ENCODE measurements at regions of chr1 and their contacts with region 1.

Region 1: DNA sequence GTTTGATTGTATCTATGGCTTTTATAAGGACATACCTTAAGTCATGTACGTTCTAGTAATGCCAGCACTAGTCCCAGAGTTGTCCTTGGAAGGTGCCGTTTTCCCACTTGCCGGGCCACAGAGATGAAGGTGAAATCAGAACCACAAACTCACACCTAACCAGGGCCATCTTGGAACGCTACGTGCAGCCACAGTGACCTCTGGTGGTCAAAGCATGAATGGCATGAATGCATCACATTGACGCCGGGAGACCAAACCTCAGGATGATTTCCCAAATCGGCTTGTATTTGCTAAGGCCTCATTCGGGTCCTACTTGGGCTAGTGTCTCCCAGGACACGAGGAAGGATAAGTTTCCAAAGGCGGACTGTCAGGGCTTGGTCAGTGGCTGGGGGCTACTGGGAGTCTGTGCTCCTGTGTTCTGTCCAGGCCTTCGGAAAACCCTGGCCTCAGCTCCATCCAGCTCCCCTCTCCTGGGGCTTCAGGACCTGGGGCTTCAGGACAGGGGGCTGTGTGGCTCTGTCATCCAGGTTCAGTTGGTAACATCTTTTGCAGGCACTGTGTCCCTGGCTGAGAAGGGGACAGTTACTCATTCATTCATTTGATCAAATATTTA is 260.5 kb downstream of the PRDM2 start:
- DNase-seq: peak; percentile 32 to 45
- ATAC-seq: peak; percentile 63 to 81
- H3K4me3 ChIP-seq: no peak overlapping the region
- H3K27ac ChIP-seq: no peak overlapping the region
- H3K4me1 ChIP-seq: no peaks in the 10 kb centered on the region
- H3K27me3 ChIP-seq: peaks cover 0 to 2% (median 0%) of the 10 kb centered on the region in 3 donors
- CTCF ChIP-seq: peak; percentile 91 to 98 (median 92)
- POLR2A ChIP-seq: no peak

Region 2: GRCh38 chr1:13605159-13605558 is 355.3 kb before region 1 on chr1:
- in situ Hi-C with region 1: no loop called
- intact Hi-C with region 1: no loop called
- DNase-seq: peak; percentile 26 to 52
- ATAC-seq: peak; percentile 43 to 60
- H3K4me3 ChIP-seq: no peak overlapping the region
- H3K27ac ChIP-seq: peak overlapping the region; percentile 12 to 60 (median 41)
- H3K4me1 ChIP-seq: peaks cover 0 to 14% of the 10 kb centered on the region in 2 donors
- H3K27me3 ChIP-seq: no peaks in the 10 kb centered on the region
- CTCF ChIP-seq: no peak
- POLR2A ChIP-seq: peak in 1 of 2 donors; percentile 22

Region 3: GRCh38 chr1:13662493-13662892 is 298.0 kb before region 1 on chr1:
- in situ Hi-C with region 1: loop called in 3 of 4 experiments (anchors 5 kb)
- intact Hi-C with region 1: loop called (anchors 1 kb)
- DNase-seq: peak; percentile 10 to 39
- ATAC-seq: peak in 1 of 2 donors; percentile 62
- H3K4me3 ChIP-seq: no peak overlapping the region
- H3K27ac ChIP-seq: peak overlapping the region in 2 of 4 donors; percentile 2 to 18
- H3K4me1 ChIP-seq: no peaks in the 10 kb centered on the region
- H3K27me3 ChIP-seq: no peaks in the 10 kb centered on the region
- CTCF ChIP-seq: no peak
- POLR2A ChIP-seq: no peak

Region 4: DNA sequence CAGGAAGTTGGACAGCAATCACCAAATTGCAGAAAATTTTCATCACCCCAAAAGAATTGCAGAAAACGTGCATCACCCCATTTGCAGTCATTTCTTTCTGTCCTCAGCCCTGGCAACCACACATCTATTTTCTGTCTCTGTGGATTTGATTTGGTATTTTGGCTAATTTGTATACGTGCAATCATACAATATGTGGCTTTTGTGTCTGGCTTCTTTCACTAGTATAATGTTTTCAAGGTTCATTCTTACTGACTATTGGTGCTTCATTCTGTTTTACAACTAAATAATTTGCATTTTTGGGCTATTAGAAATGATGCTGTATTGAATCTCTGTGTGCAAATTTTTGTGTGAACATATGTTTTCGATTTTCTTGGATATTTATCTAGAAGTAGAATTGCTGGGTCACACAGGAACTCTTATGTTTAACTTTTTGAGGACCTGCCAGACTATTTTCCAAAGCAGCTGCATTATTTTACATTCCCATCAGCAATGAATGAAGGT is 285.3 kb before region 1 on chr1:
- in situ Hi-C with region 1: loop called in 1 of 4 experiments (anchors 5 kb)
- intact Hi-C with region 1: no loop called
- DNase-seq: no peak
- ATAC-seq: no peak
- H3K4me3 ChIP-seq: no peak overlapping the region
- H3K27ac ChIP-seq: no peak overlapping the region
- H3K4me1 ChIP-seq: no peaks in the 10 kb centered on the region
- H3K27me3 ChIP-seq: peaks cover 0 to 4% (median 0%) of the 10 kb centered on the region in 3 donors
- CTCF ChIP-seq: no peak
- POLR2A ChIP-seq: no peak

Region 5: DNA sequence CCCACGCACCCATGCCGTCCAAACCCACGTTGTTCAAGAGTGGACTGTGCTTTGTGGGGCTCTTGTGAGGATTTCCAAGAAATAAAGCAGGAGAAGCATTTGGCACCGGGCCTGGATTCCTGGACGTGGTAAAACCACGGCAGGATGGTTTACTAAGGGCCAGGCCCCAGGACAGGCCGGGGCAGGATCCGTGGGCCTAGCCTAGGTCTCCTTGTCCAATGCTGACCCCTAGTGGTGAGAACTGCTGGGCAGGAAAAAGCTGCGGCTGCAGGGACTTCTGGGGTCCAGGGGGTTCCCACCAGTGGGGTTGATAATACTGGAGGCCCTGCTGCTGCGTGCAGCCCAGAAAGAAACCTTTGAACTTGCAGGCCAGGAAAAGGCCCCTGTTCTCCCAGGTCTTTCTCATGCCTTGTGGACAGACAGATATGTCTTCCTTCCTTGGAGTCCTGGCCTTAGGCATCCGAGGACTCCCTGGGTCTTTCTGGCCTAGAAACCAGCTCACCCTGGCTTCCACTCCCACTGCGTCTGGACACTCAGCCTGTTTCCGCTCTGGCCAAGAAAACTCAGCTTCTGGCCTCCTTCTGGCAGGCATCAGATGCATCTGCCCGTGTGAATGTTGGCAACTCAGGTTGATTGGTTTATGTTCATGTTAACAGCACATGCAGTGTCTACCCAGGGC is 1086.1 kb after region 1 on chr1:
- in situ Hi-C with region 1: loop called in 1 of 4 experiments (anchors 10 kb)
- intact Hi-C with region 1: loop called (anchors 10 kb)
- DNase-seq: peak in 1 of 2 donors; percentile 23
- ATAC-seq: no peak
- H3K4me3 ChIP-seq: no peak overlapping the region
- H3K27ac ChIP-seq: no peak overlapping the region
- H3K4me1 ChIP-seq: no peaks in the 10 kb centered on the region
- H3K27me3 ChIP-seq: no peaks in the 10 kb centered on the region
- CTCF ChIP-seq: peak; percentile 45 to 77 (median 68)
- POLR2A ChIP-seq: no peak

Measured in gastrocnemius medialis (tissue), 4 donors.